ENCODE measurements at regions of chr3 and their contacts with region 1.

Region 1: DNA sequence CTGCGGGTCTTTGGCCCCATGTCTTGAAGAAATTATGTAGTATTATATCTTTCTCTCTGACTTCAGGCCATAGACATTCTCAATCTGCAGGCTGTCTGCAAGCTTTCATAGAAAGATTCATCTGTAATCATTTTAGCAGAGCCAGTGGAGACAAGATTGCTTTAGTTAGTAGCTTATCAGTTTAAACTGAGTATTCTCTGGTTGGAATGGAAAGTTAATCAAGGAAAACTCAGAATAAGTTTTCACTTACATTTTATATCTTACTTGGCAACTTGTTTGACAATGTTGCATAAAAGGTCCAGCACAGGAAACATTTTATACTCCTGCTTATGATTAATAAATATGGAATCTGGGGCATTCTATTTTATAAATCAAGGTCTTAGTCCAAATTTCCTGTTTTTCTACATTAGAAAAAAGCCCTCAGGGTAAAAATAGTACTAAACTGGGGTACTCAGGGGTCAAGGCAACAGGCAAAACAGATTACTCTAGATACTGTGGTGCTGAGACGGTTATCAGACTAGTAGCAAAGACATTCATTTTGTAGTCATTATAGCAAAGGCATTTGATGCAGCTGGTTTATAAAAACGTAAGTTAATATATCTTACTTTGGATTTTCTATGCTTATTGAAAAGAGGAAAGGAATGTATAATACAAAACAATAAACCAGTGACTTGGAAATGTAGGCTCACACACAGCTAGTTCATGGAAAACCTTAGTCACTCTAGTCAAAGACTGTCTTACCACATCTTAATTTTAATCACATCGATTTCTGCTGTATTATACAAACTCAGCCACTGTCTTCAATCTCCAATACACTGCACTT is 45.2 kb upstream of the FILIP1L start:
- DNase-seq: no peak
- ATAC-seq: peak in 2 of 4 donors; percentile 26 to 30
- H3K4me3 ChIP-seq: peak overlapping the region; percentile 37
- H3K27ac ChIP-seq: peak overlapping the region; percentile 84
- H3K4me1 ChIP-seq: peaks cover 55% of the 10 kb centered on the region
- H3K27me3 ChIP-seq: no peaks in the 10 kb centered on the region
- CTCF ChIP-seq: no peak

Region 2: DNA sequence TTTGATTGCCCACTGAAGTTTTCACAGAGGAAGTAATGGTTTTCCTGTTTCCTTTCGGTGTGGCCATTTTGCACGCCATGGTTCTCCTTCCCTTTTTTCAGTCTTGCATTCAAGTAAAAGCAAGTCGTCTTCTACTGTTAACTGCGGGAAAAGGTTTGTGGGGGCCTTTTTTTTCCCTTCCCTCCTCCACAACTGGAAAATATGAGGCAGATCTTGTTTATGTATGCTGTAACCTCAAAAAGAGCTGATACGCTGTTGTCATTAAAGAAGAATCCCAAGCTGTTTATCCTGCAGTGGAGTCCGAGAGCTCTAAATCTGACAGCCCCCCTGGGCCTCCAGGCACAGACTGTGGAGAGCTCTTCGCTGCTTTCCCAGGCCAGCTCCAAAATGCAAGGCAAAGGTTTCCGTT is 85.6 kb before region 1 on chr3:
- intact Hi-C with region 1: loop called in 1 of 2 experiments (anchors 5 kb)
- DNase-seq: no peak
- ATAC-seq: no peak
- H3K4me3 ChIP-seq: no peak overlapping the region
- H3K27ac ChIP-seq: peak overlapping the region; percentile 80
- H3K4me1 ChIP-seq: peaks cover 69% of the 10 kb centered on the region
- H3K27me3 ChIP-seq: no peaks in the 10 kb centered on the region
- CTCF ChIP-seq: no peak

Region 3: GRCh38 chr3:100103558-100104441 is 55.7 kb before region 1 on chr3:
- intact Hi-C with region 1: no loop called
- DNase-seq: no peak
- ATAC-seq: peak in 2 of 4 donors; percentile 35 to 37
- H3K4me3 ChIP-seq: peak overlapping the region; percentile 71
- H3K27ac ChIP-seq: peak overlapping the region; percentile 90
- H3K4me1 ChIP-seq: peaks cover 81% of the 10 kb centered on the region
- H3K27me3 ChIP-seq: no peaks in the 10 kb centered on the region
- CTCF ChIP-seq: no peak

Region 4: DNA sequence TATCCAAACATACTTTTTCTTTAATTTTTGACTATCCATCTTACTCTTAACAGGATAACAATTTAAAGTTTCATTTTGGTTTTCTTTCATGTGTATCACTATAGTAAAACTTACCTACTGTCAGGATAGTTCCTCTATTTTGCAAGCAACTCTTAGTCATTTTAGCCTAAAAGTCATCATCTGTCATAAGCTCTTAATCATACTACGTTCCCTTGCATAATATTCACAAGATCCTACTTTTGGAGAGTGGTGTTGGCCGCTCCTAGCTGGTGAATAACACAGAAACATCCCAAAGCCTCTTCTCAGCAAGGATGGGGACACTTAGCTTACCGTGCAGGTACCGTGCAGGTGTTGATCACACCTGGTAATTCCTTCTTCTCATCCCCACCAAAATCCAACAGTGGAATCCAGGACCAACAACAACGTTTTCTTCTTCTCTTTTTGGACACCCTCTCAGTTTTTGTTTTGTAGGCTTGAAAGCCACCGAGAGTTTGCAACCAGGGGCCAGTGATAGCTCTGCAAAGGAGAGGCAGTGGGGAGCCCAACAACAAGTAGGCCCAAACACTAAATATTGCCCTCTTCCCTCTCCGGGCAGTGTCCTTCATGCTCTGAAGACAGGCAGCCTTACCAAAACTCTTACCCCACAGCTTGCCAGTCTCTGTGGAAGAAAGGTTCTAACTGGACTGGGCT is 45.7 kb before region 1 on chr3:
- intact Hi-C with region 1: loop called in 1 of 2 experiments (anchors 5 kb)
- DNase-seq: no peak
- ATAC-seq: peak; percentile 14 to 72 (median 54)
- H3K4me3 ChIP-seq: peak overlapping the region; percentile 71
- H3K27ac ChIP-seq: peak overlapping the region; percentile 90
- H3K4me1 ChIP-seq: no peaks in the 10 kb centered on the region
- H3K27me3 ChIP-seq: no peaks in the 10 kb centered on the region
- CTCF ChIP-seq: no peak